Dorsolateral prefrontal cortex (tissue), 120 donors: ENCODE measurements at regions of chr12 and their contacts with region 1.

Region 1: DNA sequence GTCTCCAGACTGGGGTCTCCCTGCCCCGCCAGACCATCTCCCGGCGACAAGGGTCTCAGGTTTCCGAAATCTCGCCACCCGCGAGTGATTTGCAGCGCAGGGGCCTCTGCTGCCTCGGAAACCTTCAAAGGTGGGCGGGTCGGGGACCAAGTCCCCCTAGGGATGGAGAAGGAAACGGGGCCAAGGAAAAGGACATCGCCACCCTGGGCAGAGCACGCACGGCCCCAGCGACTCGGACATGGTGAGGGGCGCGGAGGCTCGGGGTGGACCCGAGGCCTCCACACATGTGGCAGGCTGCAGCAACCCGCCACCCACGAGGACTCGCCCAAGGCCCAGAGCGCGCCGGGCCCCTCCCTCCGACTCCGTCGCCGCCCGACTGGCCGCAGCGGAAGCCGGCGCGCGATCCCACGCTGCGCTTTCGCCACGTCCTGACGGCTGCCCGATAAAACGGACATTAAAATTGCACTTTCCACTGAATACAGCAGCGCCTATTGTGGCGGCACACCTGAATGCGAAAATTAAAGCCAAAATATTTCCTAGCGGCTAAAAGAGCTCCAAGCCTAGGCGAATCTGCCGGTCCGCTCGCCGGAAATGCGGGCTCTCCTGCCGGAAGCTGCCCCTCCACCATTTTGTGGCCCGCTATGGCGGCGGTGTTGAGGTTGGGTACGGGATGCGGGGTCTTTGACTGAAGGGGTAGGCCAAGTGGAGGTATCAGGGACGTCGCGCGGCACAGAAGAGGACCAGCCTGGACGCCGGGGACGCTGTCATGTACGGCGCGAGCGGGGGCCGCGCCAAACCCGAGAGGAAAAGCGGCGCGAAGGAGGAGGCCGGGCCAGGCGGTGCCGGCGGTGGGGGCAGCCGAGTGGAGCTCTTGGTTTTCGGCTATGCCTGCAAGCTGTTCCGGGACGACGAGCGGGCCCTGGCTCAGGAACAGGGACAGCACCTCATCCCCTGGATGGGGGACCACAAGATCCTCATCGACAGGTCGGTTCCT is at the start of gene SFSWAP:
- DNase-seq: peak; percentile 58 to 85 (median 74)
- H3K4me3 ChIP-seq: peak within 1 kb of the TSS; percentile 74 to 100 (median 97)
- H3K27ac ChIP-seq: peak within 1 kb of the TSS; percentile 86 to 100 (median 98)
- H3K27me3 ChIP-seq: no peaks in the 10 kb centered on the region
- CTCF ChIP-seq: peak in 38 of 56 donors; percentile 4 to 58 (median 36)
- total RNA-seq, gene SFSWAP: 42.1 to 121 (median 68.6) TPM

Region 2: DNA sequence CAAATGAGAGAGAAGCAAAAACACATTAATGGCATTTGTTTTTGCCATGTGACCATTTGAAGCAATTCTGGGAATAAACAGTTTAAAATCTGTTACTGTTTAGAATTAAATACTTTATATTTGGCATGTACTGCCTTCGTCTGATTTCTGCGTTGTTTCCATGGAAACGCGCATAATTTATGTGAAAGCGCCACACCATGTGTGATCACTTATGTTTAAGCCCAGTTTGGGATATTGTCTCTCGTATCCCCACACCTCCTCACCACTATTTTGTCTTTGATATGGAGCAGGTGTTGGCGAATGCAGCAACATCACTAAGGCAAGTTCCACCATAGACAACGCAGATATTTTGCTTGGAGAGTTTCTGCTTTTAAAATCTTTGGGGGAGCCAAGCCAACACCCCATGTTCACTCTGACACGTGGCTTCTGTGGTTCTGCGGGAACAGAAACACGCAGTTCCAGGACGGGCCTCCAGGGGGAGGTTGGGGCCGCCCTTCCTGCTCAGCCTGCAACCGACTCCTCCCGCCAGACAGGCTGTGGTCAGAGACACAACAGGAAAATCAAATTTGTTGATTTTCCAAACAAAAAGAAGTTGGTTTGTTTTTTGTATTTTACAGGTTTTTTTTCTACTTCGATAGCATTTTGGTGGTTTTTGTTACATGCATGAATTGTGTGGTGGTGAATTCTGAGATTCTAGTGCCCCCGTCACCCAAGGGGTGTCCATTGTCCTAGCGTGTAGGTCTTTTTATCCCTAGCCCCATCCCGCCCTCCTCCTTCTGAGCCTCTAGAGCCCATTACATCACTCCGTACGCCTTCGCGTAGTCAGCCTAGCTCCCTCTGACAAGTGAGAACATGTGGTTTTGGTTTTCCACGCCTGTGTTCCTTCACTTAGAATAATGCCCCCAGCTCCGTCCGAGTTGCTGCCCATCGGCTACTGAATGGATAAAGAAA is 101.7 kb before region 1 on chr12:
- intact Hi-C with region 1: loop called (anchors 2 kb)
- DNase-seq: peak; percentile 81 to 89 (median 86)
- H3K4me3 ChIP-seq: peak overlapping the region in 23 of 59 donors; percentile 1 to 43 (median 13)
- H3K27ac ChIP-seq: peak overlapping the region in 40 of 59 donors; percentile 0 to 75 (median 52)
- H3K27me3 ChIP-seq: no peaks in the 10 kb centered on the region
- CTCF ChIP-seq: peak; percentile 69 to 99 (median 94)

Region 3: GRCh38 chr12:131621701-131622421 is 88.9 kb before region 1 on chr12:
- intact Hi-C with region 1: loop called in 1 of 2 experiments (anchors 5 kb)
- DNase-seq: peak; percentile 43 to 91 (median 88)
- H3K4me3 ChIP-seq: peak overlapping the region in 58 of 59 donors; percentile 11 to 72 (median 44)
- H3K27ac ChIP-seq: peak overlapping the region; percentile 51 to 99 (median 94)
- H3K27me3 ChIP-seq: no peaks in the 10 kb centered on the region
- CTCF ChIP-seq: peak in 3 of 56 donors; percentile 7 to 11 (median 10)

Region 4: DNA sequence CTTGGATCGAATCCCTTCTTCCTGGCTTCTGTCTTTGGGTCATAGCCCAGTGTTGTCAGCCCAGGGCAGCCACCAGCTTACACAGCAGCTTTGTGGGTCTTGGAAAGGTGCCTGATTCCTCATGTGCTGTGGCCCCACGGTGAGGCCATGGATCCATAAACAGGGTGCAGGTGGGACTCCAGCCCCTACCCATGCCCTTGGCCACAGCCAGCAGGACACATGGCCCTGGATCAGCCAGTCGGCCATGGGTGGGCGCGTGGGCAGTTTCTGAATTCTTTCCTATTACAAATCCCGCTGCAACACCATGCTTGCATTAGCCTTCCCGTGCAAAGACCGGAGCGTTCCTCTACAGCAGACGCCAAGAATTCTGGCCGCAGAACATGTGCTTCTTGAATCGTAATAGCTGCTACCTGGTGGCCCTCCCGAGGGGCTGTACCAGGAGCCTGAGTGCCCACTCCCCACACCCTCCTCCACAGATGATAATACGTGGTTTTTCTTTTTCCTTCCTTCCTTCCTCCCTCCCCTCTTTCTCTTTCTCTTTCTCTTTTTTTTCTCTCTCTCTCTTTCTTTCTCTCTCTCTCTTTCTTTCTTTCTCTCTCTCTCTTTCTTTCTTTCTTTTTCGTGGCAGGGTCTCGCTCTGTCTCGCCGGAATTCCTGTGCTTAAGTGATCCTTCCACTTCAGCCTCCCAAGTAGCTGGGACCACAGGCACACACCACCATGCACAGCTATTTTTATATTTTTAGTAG is 114.6 kb after region 1 on chr12:
- intact Hi-C with region 1: loop called in 1 of 2 experiments (anchors 2 kb)
- DNase-seq: no peak
- H3K4me3 ChIP-seq: peak overlapping the region in 27 of 59 donors; percentile 4 to 48 (median 23)
- H3K27ac ChIP-seq: peak overlapping the region in 11 of 59 donors; percentile 2 to 73 (median 43)
- H3K27me3 ChIP-seq: peaks cover 0 to 13% (median 0%) of the 10 kb centered on the region in 45 donors
- CTCF ChIP-seq: no peak